HEK293 (cell line): ENCODE measurements at regions of chr12 and their contacts with region 1.

Region 1: DNA sequence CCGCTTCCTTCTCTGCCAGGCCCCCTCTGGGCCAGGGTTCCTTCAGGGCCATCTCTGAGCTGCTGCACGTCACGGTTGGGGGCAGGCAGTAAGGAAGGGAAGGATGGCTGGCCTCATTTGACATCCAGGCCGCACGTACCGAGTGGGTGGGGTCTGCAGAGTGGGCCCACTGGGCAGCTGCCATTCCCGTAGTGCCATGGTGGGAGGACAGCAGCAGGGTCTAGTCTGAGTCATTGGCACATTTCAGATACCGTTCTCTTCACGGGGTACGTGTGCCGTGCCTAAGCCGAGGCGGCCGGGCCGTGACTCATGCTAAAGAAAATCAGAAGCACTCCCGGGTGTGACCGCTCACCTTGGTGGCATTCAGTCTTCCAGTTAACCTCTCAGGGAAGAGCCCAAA is 43.9 kb downstream of the IL31 start:
- H3K4me3 ChIP-seq: no peak overlapping the region
- H3K27ac ChIP-seq: no peak overlapping the region
- H3K4me1 ChIP-seq: no peaks in the 10 kb centered on the region
- CTCF ChIP-seq: no peak

Region 2: DNA sequence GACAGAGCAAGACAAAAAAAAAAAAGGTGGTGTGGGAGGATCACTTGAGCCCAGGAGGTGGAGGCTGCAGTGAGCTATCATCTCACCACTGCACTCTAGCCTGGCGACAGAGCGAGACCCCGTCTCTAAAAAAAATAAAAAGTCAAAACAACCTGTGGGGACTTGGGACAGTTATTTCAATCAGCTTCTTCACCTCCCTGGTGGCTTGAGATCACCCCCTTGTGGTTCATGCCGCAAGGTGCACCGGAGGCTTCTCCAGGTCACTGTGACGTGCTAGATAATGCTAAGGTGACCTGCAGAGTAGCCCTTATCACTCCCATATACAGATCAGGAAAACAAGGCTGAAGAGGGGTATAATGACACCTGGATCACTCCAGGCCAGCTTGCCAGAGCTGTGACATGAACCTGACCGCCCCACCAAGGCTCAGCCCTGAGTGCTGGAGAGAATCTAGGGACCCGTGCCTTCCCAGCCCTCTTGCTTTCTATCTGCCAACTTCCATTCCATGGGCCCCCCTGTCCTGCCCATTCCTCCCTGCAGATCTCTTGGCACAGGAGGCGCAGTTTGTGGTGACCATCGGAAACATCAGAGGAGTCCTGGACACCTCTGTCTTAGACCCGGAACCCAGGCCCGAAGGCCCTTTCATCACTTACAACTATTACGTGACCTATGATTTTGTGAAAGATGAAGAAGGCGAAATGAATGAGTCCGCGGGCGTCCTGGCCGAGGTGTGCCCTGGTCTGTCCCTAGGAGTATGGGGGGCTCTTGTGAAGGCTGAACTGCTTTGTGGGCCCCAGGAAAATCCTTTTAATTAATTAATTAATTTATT is 60.9 kb after region 1 on chr12:
- CTCF ChIA-PET with region 1: interaction called, 12 read pairs
- POLR2A ChIA-PET with region 1: no interaction called
- H3K4me3 ChIP-seq: no peak overlapping the region
- H3K27ac ChIP-seq: no peak overlapping the region
- H3K4me1 ChIP-seq: no peaks in the 10 kb centered on the region
- CTCF ChIP-seq: peak; percentile 62